ENCODE measurements at regions of chr9 and their contacts with region 1.

Region 1: DNA sequence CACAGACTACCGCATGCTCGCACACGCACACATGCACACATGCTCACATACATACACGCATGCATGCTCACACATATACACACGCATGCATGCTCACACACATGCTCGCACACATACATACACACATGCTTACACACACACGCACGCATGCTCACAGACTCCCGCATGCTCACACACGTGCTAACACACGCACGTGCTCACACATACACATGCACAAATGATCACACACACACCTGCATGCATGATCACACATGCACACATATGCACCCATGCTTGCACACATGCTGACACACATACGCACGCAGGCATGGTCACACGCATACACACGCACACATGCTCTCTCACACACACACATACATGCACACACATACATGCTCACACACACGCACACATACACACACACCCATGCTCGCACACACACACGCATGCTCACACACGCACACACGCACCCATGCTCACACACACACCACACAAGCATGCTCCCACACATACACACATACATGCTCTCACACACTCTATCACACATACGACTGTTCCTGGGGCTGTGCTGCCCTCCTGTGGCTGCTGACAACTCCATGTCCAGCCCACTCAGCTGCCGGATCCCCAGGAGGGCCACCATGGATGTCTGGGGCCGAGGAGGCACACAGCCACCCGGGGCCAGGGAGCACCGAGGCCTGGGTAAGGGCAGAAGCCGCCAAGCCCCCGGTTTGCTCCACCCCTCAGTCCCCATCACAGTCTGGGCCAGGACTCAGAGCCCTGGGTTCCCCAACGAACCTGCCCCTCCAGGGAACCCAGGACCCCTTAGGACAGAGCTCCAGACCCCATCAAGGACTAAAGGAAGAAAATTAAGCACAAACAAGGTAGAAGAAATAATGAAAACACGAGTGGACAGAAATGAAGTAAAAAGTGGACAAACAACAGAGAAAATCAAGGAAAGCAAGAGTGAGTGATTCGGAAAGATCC is 31.4 kb upstream of the EGFL7 start:
- DNase-seq: peak; percentile 74
- H3K4me3 ChIP-seq: no peak overlapping the region
- H3K27ac ChIP-seq: no peak overlapping the region
- H3K4me1 ChIP-seq: no peaks in the 10 kb centered on the region
- H3K27me3 ChIP-seq: no peaks in the 10 kb centered on the region
- CTCF ChIP-seq: peak; percentile 86 to 88
- POLR2A ChIP-seq: no peak

Region 2: GRCh38 chr9:136345281-136346156 is 285.8 kb before region 1 on chr9:
- CTCF ChIA-PET with region 1: no interaction called
- POLR2A ChIA-PET with region 1: no interaction called
- dilution Hi-C with region 1: no loop called
- intact Hi-C with region 1: loop called (anchors 1 kb)
- DNase-seq: peak; percentile 35
- H3K4me3 ChIP-seq: no peak overlapping the region
- H3K27ac ChIP-seq: no peak overlapping the region
- H3K4me1 ChIP-seq: peaks cover 10% of the 10 kb centered on the region
- H3K27me3 ChIP-seq: no peaks in the 10 kb centered on the region
- CTCF ChIP-seq: peak; percentile 39 to 71
- POLR2A ChIP-seq: no peak

Region 3: GRCh38 chr9:136488247-136489214 is 142.8 kb before region 1 on chr9:
- CTCF ChIA-PET with region 1: interaction called, 261 read pairs
- POLR2A ChIA-PET with region 1: interaction called, 7 read pairs
- dilution Hi-C with region 1: no loop called
- intact Hi-C with region 1: loop called (anchors 1 kb)
- DNase-seq: peak; percentile 54
- H3K4me3 ChIP-seq: no peak overlapping the region
- H3K27ac ChIP-seq: no peak overlapping the region
- H3K4me1 ChIP-seq: peaks cover 8% of the 10 kb centered on the region
- H3K27me3 ChIP-seq: no peaks in the 10 kb centered on the region
- CTCF ChIP-seq: peak; percentile 88 to 97
- POLR2A ChIP-seq: no peak

Region 4: DNA sequence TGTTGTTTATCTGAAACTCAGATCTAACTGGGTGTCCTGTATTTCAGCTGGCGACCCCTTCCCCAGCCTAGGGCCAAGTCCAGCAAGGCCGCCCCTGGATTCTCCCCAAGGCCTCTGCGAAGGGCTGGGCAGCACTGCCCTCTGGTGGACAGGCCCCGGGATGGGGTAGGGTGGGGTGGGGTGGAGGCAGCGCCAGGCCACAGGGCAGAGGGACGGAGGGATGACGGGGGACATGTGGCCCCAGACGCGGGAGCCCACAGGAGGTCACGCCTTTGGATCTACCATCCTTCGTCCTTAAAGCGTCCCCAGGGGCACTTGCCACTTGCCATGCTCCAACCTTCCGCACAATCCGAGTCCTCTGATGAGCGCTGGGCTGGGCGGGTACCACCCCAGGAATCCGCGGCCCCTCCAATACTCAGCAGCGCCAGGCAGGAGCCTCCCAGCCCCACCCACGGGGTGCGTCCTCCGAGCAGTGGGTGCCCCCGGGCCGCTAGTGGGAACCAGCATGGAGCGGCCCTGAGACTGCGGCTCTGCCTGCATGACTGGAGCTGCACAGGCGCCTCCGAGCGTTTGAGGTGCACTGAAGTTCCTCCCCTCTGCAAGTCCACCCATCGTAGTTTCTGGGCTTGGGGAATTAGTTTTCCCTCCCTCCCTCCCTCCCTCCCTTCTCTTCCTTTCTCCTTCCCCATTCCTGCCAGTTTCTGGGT is 63.1 kb after region 1 on chr9:
- CTCF ChIA-PET with region 1: no interaction called
- POLR2A ChIA-PET with region 1: no interaction called
- dilution Hi-C with region 1: no loop called
- intact Hi-C with region 1: no loop called
- DNase-seq: peak; percentile 61
- H3K4me3 ChIP-seq: no peak overlapping the region
- H3K27ac ChIP-seq: no peak overlapping the region
- H3K4me1 ChIP-seq: peaks cover 6% of the 10 kb centered on the region
- H3K27me3 ChIP-seq: no peaks in the 10 kb centered on the region
- CTCF ChIP-seq: peak; percentile 75 to 89
- POLR2A ChIP-seq: no peak

Measured in endothelial cell of umbilical vein (primary cell).